A549 (cell line): ENCODE measurements at regions of chr17 and their contacts with region 1.

Region 1: DNA sequence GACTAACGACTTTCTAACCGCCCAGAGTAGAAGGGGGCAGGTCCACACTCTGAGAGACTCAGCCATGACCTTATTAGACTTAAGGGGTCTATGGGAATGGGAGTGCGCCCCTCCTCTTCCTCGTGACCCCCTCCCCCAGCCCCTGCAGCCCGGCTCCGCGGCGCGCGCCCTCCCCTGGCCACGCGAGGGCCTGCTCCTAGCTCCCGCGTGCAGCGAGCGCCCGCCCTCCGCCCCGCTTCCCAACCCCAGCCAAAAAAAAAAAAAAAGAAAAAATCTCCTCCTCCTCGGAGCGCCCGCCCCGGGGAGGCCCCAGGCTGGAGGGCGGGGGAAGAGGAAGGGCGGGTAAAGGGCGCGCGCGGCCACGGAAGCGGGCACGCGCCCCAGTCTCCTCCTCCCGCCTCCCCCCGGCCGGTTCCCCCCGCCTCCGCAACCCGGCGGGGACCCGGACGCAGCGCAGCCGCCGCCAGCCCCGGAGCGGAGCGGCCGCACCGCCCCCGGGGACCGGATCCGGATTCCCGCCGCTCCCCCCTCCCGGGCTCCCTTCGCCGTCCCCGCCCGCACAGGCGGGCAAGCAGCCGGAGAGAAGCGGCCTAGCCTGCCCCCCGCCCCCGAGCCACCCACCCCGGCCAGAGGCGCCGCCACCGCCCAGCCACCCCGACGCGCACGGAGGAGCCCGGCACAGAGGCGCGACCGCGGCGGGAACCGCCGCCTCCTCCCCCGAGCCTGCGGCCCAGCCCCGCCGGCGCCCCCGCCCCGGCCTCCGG is 949 bp downstream of the UBTF start:
- DNase-seq: peak; percentile 75 to 93
- ATAC-seq: peak; percentile 10 to 38
- H3K4me3 ChIP-seq: peak overlapping the region; percentile 89
- H3K27ac ChIP-seq: peak overlapping the region; percentile 97 to 99
- H3K4me1 ChIP-seq: peaks cover 25% of the 10 kb centered on the region
- CTCF ChIP-seq: peak; percentile 67
- EP300 ChIP-seq: no peak
- POLR2A ChIP-seq: 0 out of 2 replicates have a peak, but pooled peaks have one; percentile 23
- RAD21 ChIP-seq: no peak; a peak in 2 of 5 replicates

Region 2: GRCh38 chr17:44186307-44187130 is 32.0 kb before region 1 on chr17 and contains the start of gene TMUB2:
- CTCF ChIA-PET with region 1: interaction called, 61 read pairs
- POLR2A ChIA-PET with region 1: interaction called, 10 read pairs
- DNase-seq: peak; percentile 100
- ATAC-seq: peak; percentile 85 to 88
- H3K4me3 ChIP-seq: peak within 1 kb of the TSS; percentile 87
- H3K27ac ChIP-seq: peak within 1 kb of the TSS; percentile 92 to 97
- H3K4me1 ChIP-seq: peaks cover 24% of the 10 kb centered on the region
- CTCF ChIP-seq: no peak
- EP300 ChIP-seq: no peak
- POLR2A ChIP-seq: peak; percentile 98
- RAD21 ChIP-seq: no peak
- polyA plus RNA-seq, gene TMUB2: 36.2 and 43.3 TPM in 2 replicates

Region 3: DNA sequence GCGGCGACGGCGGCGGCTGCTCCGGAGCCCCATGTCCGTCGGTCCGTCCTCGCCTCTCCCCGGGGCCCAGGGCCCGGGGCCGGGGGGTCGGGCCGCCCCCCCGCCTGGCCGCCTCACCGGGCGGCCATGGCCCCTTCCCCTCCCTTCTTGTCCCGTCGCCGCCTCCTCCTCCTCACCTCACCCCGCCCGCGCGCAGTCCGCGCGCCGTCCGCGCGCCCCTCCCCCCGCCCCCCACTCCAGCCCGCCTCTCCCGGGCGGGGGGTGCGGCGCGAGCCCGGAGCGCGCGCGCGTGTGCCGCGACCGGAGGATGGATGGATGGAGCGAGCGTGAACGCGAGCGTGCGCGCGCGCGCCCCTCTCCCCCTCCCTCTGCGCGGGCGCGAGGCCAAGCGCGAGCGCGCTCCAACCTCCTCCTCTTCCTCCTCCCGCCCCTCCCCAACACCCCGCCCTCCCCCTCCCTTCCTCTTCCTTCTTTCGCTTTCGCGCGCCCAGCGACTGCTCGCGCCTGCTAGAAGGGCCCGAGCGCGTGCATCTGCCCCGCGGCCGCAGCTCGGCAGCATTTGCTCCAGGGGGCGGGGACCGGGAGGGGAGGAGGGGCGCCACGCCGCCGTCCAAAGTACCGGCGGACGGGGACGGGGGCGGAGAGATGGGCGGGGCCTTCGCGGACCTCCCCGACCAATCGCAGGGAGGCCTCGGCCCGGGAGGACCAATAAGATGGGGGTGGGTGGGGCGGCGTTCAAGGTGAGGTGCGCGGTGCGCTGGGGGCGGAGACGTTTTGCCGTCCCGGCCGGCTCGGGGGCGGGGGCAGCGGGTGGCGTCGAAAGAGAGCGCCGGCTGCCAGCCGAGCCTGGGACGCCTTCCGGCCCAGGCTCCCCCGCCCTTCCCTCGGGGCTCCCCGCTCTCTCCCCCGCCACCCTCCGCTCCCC is 18.7 kb before region 1 on chr17 and contains the start of gene ATXN7L3:
- CTCF ChIA-PET with region 1: interaction called, 68 read pairs
- POLR2A ChIA-PET with region 1: interaction called, 6 read pairs
- DNase-seq: peak; percentile 99
- ATAC-seq: peak; percentile 66 to 87
- H3K4me3 ChIP-seq: peak within 1 kb of the TSS; percentile 87
- H3K27ac ChIP-seq: peak within 1 kb of the TSS; percentile 98 to 100
- H3K4me1 ChIP-seq: peaks cover 35% of the 10 kb centered on the region
- CTCF ChIP-seq: no peak
- EP300 ChIP-seq: 0 out of 5 replicates have a peak, but pooled peaks of 1 of the 2 experiments have one; percentile 29
- POLR2A ChIP-seq: peak; percentile 40; the same call in 1 of the 2 replicates
- RAD21 ChIP-seq: no peak
- polyA plus RNA-seq, gene ATXN7L3: 65.7 and 72.7 TPM in 2 replicates

Region 4: GRCh38 chr17:44308865-44309264 is 90.3 kb after region 1 on chr17:
- CTCF ChIA-PET with region 1: interaction called, 159 read pairs
- POLR2A ChIA-PET with region 1: interaction called, 13 read pairs
- DNase-seq: no peak
- ATAC-seq: peak in 1 of 2 experiments; percentile 4; a peak in 1 of 6 replicates
- H3K4me3 ChIP-seq: no peak overlapping the region
- H3K27ac ChIP-seq: no peak overlapping the region
- H3K4me1 ChIP-seq: peaks cover 15% of the 10 kb centered on the region
- CTCF ChIP-seq: no peak
- EP300 ChIP-seq: no peak
- POLR2A ChIP-seq: no peak
- RAD21 ChIP-seq: no peak

Region 5: DNA sequence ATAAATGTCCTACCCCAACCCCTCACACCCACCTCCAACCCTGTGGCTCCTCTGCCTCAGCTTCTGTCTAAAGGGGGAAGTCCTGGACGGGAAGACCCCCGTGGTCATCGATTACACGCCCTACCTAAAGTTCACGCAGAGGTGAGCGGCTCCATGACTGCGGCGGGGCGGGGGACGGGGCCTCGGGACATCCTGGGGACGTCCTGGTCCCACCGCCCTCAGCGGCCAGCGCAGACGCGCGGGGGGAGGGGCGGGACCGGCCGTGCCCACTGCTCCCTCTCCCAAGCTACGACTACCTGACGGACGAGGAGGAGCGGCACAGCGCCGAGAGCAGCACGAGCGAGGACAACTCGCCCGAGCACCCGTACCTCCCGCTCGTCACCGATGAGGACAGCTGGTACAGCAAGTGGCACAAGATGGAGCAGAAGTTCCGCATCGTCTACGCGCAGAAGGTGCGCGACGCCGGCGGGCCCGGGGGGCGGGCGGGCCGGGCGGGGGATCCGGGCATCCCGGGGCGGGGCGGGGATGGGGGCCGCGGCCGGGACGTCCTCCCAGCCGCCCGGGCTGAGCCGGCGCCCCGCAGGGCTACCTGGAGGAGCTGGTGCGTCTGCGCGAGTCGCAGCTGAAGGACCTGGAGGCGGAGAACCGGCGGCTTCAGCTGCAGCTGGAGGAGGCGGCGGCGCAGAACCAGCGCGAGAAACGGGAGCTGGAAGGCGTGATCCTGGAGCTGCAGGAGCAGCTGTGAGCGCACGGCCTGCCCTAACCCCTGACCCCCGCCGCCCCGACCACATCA is 96.5 kb after region 1 on chr17:
- CTCF ChIA-PET with region 1: interaction called, 159 read pairs
- POLR2A ChIA-PET with region 1: interaction called, 13 read pairs
- DNase-seq: peak; percentile 73 to 93
- ATAC-seq: peak; percentile 64 to 73
- H3K4me3 ChIP-seq: peak overlapping the region; percentile 63
- H3K27ac ChIP-seq: peak overlapping the region; percentile 51 to 78; a peak in 5 of 6 replicates
- H3K4me1 ChIP-seq: 0 out of 3 replicates have a peak, but pooled peaks cover 4% of the 10 kb centered on the region
- CTCF ChIP-seq: no peak
- EP300 ChIP-seq: no peak
- POLR2A ChIP-seq: no peak
- RAD21 ChIP-seq: no peak

Region 6: GRCh38 chr17:44324571-44325275 is 106.2 kb after region 1 on chr17 and contains the start of gene SLC25A39:
- CTCF ChIA-PET with region 1: interaction called, 246 read pairs
- POLR2A ChIA-PET with region 1: interaction called, 14 read pairs
- DNase-seq: peak; percentile 76 to 97
- ATAC-seq: peak; percentile 63 to 79
- H3K4me3 ChIP-seq: peak within 1 kb of the TSS; percentile 98
- H3K27ac ChIP-seq: peak within 1 kb of the TSS; percentile 93
- H3K4me1 ChIP-seq: peaks cover 17% of the 10 kb centered on the region
- CTCF ChIP-seq: no peak
- EP300 ChIP-seq: no peak
- POLR2A ChIP-seq: peak; percentile 67
- RAD21 ChIP-seq: no peak; a peak in 2 of 5 replicates
- polyA plus RNA-seq, gene SLC25A39: 80.9 and 90.1 TPM in 2 replicates

Region 7: DNA sequence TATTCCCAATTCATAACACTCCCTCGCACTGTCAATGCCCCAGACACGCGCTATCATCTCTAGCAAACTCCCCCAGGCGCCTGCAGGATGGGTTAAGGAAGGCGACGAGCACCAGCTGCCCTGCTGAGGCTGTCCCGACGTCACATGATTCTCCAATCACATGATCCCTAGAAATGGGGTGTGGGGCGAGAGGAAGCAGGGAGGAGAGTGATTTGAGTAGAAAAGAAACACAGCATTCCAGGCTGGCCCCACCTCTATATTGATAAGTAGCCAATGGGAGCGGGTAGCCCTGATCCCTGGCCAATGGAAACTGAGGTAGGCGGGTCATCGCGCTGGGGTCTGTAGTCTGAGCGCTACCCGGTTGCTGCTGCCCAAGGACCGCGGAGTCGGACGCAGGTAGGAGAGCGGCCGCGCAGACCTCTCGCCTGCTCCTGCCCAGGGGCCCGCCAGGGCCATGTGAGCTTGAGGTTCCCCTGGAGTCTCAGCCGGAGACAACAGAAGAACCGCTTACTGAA is 126.5 kb after region 1 on chr17 and contains the start of gene GRN:
- CTCF ChIA-PET with region 1: interaction called, 246 read pairs
- POLR2A ChIA-PET with region 1: interaction called, 20 read pairs
- DNase-seq: peak; percentile 100
- ATAC-seq: peak; percentile 89 to 99
- H3K4me3 ChIP-seq: peak within 1 kb of the TSS; percentile 92
- H3K27ac ChIP-seq: peak within 1 kb of the TSS; percentile 81 to 85
- H3K4me1 ChIP-seq: peaks cover 9% of the 10 kb centered on the region
- CTCF ChIP-seq: no peak
- EP300 ChIP-seq: no peak
- POLR2A ChIP-seq: peak; percentile 73
- RAD21 ChIP-seq: no peak
- polyA plus RNA-seq, gene GRN: 111 and 147 TPM in 2 replicates